Mammary epithelial cell (primary cell): ENCODE measurements at regions of chr5 and their contacts with region 1.

Region 1: DNA sequence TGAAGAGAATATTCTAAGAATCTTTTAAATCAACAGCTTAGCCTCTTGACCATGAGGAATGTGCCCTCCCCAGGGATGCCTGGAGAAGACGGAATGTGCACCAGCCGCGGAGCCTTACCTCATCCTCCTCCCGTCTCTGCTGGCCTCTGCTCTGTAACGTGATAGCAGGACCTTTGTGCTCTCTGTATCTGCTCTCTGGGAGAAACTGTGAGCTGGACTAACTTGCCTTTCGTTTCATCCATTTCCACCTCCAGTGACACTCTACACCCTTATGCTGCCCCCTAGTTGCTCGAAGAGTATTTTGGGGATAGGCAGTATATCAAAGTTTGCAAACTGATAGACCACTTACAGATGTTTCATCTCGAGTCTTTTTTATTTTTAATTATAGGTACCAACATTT is 141.4 kb downstream of the NPR3 start:
- DNase-seq: no peak
- H3K4me3 ChIP-seq: no peak overlapping the region
- H3K27ac ChIP-seq: no peak overlapping the region
- H3K4me1 ChIP-seq: no peaks in the 10 kb centered on the region
- H3K27me3 ChIP-seq: peaks cover 2% of the 10 kb centered on the region
- CTCF ChIP-seq: peak in 1 of 2 donors; percentile 17

Region 2: GRCh38 chr5:32794086-32794485 is 58.4 kb before region 1 on chr5:
- CTCF ChIA-PET with region 1: no interaction called
- dilution Hi-C with region 1: no loop called
- in situ Hi-C with region 1: no loop called
- intact Hi-C with region 1: no loop called
- DNase-seq: no peak
- H3K4me3 ChIP-seq: no peak overlapping the region
- H3K27ac ChIP-seq: no peak overlapping the region
- H3K4me1 ChIP-seq: no peaks in the 10 kb centered on the region
- H3K27me3 ChIP-seq: peaks cover 3% of the 10 kb centered on the region
- CTCF ChIP-seq: peak in 1 of 2 donors; percentile 30

Region 3: GRCh38 chr5:32880796-32881195 is 28.3 kb after region 1 on chr5:
- CTCF ChIA-PET with region 1: no interaction called
- dilution Hi-C with region 1: loop called (anchors 5 kb)
- in situ Hi-C with region 1: no loop called
- intact Hi-C with region 1: no loop called
- DNase-seq: no peak
- H3K4me3 ChIP-seq: no peak overlapping the region
- H3K27ac ChIP-seq: no peak overlapping the region
- H3K4me1 ChIP-seq: no peaks in the 10 kb centered on the region
- H3K27me3 ChIP-seq: no peaks in the 10 kb centered on the region
- CTCF ChIP-seq: no peak